MCF 10A (cell line): ENCODE measurements at regions of chr20 and their contacts with region 1.

Region 1: DNA sequence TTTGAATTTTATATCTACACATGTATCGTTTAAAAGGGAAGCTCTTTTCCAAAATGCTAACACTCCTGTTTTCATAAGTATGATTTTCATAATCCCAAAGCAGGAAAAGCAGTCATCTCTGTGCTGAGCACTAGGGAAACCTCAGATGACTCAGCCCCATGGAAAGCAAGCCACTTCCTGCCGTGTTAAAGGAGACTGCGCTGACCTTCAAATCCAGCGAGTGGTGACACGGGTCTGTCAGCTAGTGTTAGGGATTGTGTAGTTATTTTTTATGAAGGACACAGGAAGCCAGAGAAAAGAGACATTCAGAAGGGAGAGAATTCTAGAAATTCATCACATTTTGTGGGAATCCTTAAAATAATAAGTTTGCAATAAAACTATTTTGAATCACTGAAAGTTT is 57.0 kb upstream of the CD93 start:
- DNase-seq: peak; percentile 89
- H3K4me3 Mint-ChIP-seq: no peak overlapping the region
- H3K27ac Mint-ChIP-seq: peak overlapping the region; percentile 82
- H3K4me1 Mint-ChIP-seq: peaks cover 65% of the 10 kb centered on the region
- H3K27me3 Mint-ChIP-seq: no peaks in the 10 kb centered on the region
- CTCF ChIP-seq: no peak

Region 2: DNA sequence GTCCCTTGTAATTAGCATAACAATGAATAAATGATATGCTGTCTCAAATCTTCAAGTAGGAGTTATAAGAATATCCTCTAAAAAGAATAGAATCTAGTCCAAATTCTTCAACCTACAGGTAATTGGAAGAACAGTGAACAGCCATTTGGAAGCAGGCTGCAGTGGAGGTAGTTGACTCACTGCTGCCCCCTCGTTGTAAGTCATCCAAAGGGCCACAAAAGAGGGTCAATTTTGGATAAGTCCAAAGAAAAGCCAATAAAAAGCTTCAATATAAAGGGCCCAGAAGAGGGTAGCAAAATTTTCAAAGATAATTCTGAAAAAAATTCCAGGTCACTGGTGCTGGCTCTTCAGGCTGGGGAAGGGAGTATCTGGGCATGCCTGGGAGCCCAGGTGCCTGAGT is 168.7 kb before region 1 on chr20:
- CTCF ChIA-PET with region 1: no interaction called
- POLR2A ChIA-PET with region 1: no interaction called
- intact Hi-C with region 1: no loop called
- DNase-seq: peak; percentile 53
- H3K4me3 Mint-ChIP-seq: no peak overlapping the region
- H3K27ac Mint-ChIP-seq: no peak overlapping the region
- H3K4me1 Mint-ChIP-seq: no peaks in the 10 kb centered on the region
- H3K27me3 Mint-ChIP-seq: no peaks in the 10 kb centered on the region
- CTCF ChIP-seq: peak; percentile 61

Region 3: GRCh38 chr20:23099791-23100698 is 43.1 kb before region 1 on chr20:
- CTCF ChIA-PET with region 1: interaction called, 19 read pairs
- POLR2A ChIA-PET with region 1: interaction called, 33 read pairs
- intact Hi-C with region 1: no loop called
- DNase-seq: peak; percentile 81
- H3K4me3 Mint-ChIP-seq: peak overlapping the region; percentile 12
- H3K27ac Mint-ChIP-seq: no peak overlapping the region
- H3K4me1 Mint-ChIP-seq: peaks cover 49% of the 10 kb centered on the region
- H3K27me3 Mint-ChIP-seq: no peaks in the 10 kb centered on the region
- CTCF ChIP-seq: no peak

Region 4: DNA sequence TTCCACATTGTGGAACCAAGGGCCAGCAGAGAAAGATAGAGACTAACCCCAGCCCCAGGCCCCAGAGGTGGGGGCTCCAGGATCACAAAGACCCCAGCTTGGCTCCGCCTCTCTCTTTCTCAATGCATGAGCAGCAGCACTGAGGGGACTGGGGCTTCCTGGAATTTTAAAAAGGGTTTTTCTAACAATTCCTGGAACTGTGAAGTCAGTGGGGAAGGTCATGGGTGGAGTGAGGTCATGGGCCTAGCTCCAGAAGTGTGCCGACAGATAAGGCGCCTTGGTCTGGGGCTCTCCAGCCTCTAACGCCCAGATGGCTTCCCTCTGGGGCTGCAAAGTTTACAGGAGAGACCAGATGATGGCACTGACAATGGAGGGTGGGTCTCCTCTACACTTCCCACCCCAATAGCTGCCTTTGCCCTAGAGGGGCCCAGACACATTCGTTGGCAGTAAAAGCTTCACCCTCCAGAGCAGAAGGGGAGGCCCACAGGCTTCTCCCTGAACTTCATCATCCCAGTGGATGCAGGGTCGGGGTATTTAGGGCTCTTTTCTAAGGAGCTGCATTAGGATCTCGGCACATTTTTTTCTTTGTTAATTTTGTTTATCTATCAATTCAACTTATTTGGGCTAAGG is 10.1 kb before region 1 on chr20:
- CTCF ChIA-PET with region 1: interaction called, 4 read pairs
- POLR2A ChIA-PET with region 1: interaction called, 31 read pairs
- intact Hi-C with region 1: no loop called
- DNase-seq: no peak
- H3K4me3 Mint-ChIP-seq: no peak overlapping the region
- H3K27ac Mint-ChIP-seq: no peak overlapping the region
- H3K4me1 Mint-ChIP-seq: peaks cover 27% of the 10 kb centered on the region
- H3K27me3 Mint-ChIP-seq: no peaks in the 10 kb centered on the region
- CTCF ChIP-seq: no peak

Region 5: GRCh38 chr20:23156170-23156841 is 13.2 kb after region 1 on chr20:
- CTCF ChIA-PET with region 1: interaction called, 66 read pairs
- POLR2A ChIA-PET with region 1: interaction called, 555 read pairs
- intact Hi-C with region 1: loop called (anchors 2 kb)
- DNase-seq: peak; percentile 93
- H3K4me3 Mint-ChIP-seq: no peak overlapping the region
- H3K27ac Mint-ChIP-seq: peak overlapping the region; percentile 99
- H3K4me1 Mint-ChIP-seq: peaks cover 70% of the 10 kb centered on the region
- H3K27me3 Mint-ChIP-seq: no peaks in the 10 kb centered on the region
- CTCF ChIP-seq: no peak

Region 6: DNA sequence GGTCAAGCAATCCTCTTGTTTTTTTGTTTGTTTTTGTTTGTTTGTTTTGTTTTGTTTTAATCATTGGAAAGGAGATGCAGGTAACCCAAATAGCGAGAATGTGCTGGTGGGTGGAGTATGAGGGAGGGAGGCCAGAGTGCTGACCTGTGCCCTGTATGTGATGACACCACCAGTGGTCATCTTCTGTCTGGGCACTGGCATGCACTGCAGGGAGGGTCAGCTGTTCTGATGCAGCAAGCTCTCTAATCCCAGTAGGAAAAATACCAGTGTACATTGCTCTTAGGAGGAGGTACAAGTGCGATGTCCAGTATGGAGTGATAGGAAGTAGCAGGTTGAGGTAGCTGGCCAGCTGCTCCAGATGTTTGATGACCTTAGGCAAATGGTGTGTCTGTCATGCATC is 610.5 kb after region 1 on chr20:
- CTCF ChIA-PET with region 1: no interaction called
- POLR2A ChIA-PET with region 1: no interaction called
- intact Hi-C with region 1: no loop called
- DNase-seq: no peak
- H3K4me3 Mint-ChIP-seq: no peak overlapping the region
- H3K27ac Mint-ChIP-seq: no peak overlapping the region
- H3K4me1 Mint-ChIP-seq: no peaks in the 10 kb centered on the region
- H3K27me3 Mint-ChIP-seq: no peaks in the 10 kb centered on the region
- CTCF ChIP-seq: no peak